CD4-positive, alpha-beta memory T cell (primary cell): ENCODE measurements at regions of chr12 and their contacts with region 1.

Region 1: DNA sequence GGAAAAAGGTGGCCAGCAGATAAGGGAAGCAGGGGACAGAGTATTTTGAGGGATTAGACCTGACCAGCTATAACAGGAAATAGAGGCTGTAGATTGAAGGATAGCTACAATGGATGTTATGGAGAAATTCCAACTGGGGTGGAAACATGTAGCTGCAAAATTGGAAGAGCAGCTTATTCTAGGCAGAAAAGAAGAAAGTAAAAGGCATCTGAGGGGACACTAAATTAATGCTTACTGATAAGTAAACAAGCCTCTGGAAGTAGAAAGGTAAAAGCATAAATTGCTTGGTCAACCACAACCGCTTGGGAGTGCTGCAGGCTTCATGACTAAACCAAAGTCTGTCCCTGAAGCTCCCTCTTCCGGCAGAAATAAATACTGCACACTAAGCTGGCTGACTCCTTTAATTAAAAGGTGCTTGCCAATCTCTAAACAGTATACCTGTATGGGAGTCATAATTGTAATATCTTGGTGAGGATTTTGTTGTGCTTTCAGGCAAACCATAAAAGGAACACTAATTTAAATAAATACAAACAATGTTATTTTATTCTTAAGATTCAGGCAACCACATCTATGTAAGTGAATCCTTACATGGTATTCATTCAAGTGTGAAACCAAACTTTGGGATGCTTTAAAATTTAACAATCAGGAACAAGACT is 7.7 kb downstream of the UBC start:
- DNase-seq: peak; percentile 85 to 95 (median 90)
- H3K4me3 ChIP-seq: no peak overlapping the region
- H3K4me3 Mint-ChIP-seq: no peak overlapping the region
- H3K27ac ChIP-seq: no peak overlapping the region
- H3K27ac Mint-ChIP-seq: peak overlapping the region in 6 of 7 donors; percentile 12 to 81 (median 64)
- H3K4me1 ChIP-seq: peaks cover 33% of the 10 kb centered on the region
- H3K4me1 Mint-ChIP-seq: peaks cover 25 to 29% (median 26%) of the 10 kb centered on the region in 4 donors
- H3K27me3 ChIP-seq: no peaks in the 10 kb centered on the region
- H3K27me3 Mint-ChIP-seq: no peaks in the 10 kb centered on the region

Region 2: GRCh38 chr12:124917135-124917840 is 10.6 kb after region 1 on chr12:
- CTCF ChIA-PET with region 1: interaction called, 78 read pairs
- POLR2A ChIA-PET with region 1: interaction called, 50 read pairs
- intact Hi-C with region 1: loop called (anchors 1 kb)
- DNase-seq: peak; percentile 94 to 98 (median 96)
- H3K4me3 ChIP-seq: peak overlapping the region; percentile 39 to 53
- H3K4me3 Mint-ChIP-seq: peak overlapping the region; percentile 82 to 99 (median 87)
- H3K27ac ChIP-seq: peak overlapping the region; percentile 84
- H3K27ac Mint-ChIP-seq: peak overlapping the region; percentile 95 to 100 (median 97)
- H3K4me1 ChIP-seq: peaks cover 81% of the 10 kb centered on the region
- H3K4me1 Mint-ChIP-seq: peaks cover 70 to 98% (median 83%) of the 10 kb centered on the region in 4 donors
- H3K27me3 ChIP-seq: no peaks in the 10 kb centered on the region
- H3K27me3 Mint-ChIP-seq: peaks cover 2 to 9% of the 10 kb centered on the region in 2 donors

Region 3: GRCh38 chr12:124940549-124941527 is 34.1 kb after region 1 on chr12:
- CTCF ChIA-PET with region 1: interaction called, 898 read pairs
- POLR2A ChIA-PET with region 1: interaction called, 237 read pairs
- intact Hi-C with region 1: loop called (anchors 1 kb)
- DNase-seq: peak; percentile 76 to 87 (median 77)
- H3K4me3 ChIP-seq: peak overlapping the region; percentile 73 to 82
- H3K4me3 Mint-ChIP-seq: no peak overlapping the region
- H3K27ac ChIP-seq: peak overlapping the region; percentile 54
- H3K27ac Mint-ChIP-seq: peak overlapping the region in 1 of 7 donors; percentile 29
- H3K4me1 ChIP-seq: peaks cover 30% of the 10 kb centered on the region
- H3K4me1 Mint-ChIP-seq: peaks cover 0 to 9% (median 6%) of the 10 kb centered on the region in 4 donors
- H3K27me3 ChIP-seq: no peaks in the 10 kb centered on the region
- H3K27me3 Mint-ChIP-seq: no peaks in the 10 kb centered on the region

Region 4: DNA sequence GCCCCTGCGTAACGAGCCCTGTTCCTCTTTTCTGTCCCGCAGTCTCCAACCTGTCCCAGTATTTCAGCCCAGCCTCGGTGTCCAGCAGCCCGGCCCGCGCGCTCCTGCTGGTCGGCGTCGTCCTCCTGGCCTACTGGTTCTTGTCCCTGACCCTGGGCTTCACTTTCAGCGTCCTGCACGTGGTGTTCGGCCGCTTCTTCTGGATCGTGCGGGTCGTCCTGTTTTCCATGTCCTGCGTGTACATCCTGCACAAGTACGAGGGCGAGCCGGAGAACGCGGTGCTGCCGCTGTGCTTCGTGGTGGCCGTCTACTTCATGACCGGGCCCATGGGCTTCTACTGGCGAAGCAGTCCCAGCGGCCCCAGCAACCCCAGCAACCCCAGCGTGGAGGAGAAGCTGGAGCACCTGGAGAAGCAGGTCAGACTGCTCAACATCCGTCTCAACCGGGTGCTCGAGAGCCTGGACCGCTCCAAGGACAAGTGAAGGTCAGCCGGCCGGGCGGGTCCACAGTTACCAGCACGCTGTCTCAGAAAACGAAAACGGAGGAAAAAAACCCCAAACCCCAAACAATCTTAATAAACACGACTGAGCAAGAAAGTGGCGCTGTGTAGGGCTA is 118.3 kb after region 1 on chr12:
- CTCF ChIA-PET with region 1: no interaction called
- POLR2A ChIA-PET with region 1: no interaction called
- intact Hi-C with region 1: no loop called
- DNase-seq: no peak
- H3K4me3 ChIP-seq: no peak overlapping the region
- H3K4me3 Mint-ChIP-seq: no peak overlapping the region
- H3K27ac ChIP-seq: no peak overlapping the region
- H3K27ac Mint-ChIP-seq: no peak overlapping the region
- H3K4me1 ChIP-seq: no peaks in the 10 kb centered on the region
- H3K4me1 Mint-ChIP-seq: no peaks in the 10 kb centered on the region
- H3K27me3 ChIP-seq: no peaks in the 10 kb centered on the region
- H3K27me3 Mint-ChIP-seq: no peaks in the 10 kb centered on the region

Region 5: GRCh38 chr12:125065021-125065795 is 158.5 kb after region 1 on chr12 and contains the start of gene AACS:
- CTCF ChIA-PET with region 1: interaction called, 6 read pairs
- POLR2A ChIA-PET with region 1: no interaction called
- intact Hi-C with region 1: loop called (anchors 2 kb)
- DNase-seq: peak; percentile 64 to 73 (median 68)
- H3K4me3 ChIP-seq: peak within 1 kb of the TSS; percentile 30 to 58
- H3K4me3 Mint-ChIP-seq: peak within 1 kb of the TSS; percentile 83 to 96 (median 88)
- H3K27ac ChIP-seq: peak within 1 kb of the TSS; percentile 56
- H3K27ac Mint-ChIP-seq: peak within 1 kb of the TSS; percentile 66 to 93 (median 82)
- H3K4me1 ChIP-seq: peaks cover 15% of the 10 kb centered on the region
- H3K4me1 Mint-ChIP-seq: peaks cover 11 to 21% (median 13%) of the 10 kb centered on the region in 4 donors
- H3K27me3 ChIP-seq: peaks cover 7% of the 10 kb centered on the region
- H3K27me3 Mint-ChIP-seq: peaks cover under 1 to 2% of the 10 kb centered on the region in 2 donors
- total RNA-seq, gene AACS: 11.8 to 12.2 TPM